ENCODE measurements at regions of chr10 and their contacts with region 1.

Region 1: DNA sequence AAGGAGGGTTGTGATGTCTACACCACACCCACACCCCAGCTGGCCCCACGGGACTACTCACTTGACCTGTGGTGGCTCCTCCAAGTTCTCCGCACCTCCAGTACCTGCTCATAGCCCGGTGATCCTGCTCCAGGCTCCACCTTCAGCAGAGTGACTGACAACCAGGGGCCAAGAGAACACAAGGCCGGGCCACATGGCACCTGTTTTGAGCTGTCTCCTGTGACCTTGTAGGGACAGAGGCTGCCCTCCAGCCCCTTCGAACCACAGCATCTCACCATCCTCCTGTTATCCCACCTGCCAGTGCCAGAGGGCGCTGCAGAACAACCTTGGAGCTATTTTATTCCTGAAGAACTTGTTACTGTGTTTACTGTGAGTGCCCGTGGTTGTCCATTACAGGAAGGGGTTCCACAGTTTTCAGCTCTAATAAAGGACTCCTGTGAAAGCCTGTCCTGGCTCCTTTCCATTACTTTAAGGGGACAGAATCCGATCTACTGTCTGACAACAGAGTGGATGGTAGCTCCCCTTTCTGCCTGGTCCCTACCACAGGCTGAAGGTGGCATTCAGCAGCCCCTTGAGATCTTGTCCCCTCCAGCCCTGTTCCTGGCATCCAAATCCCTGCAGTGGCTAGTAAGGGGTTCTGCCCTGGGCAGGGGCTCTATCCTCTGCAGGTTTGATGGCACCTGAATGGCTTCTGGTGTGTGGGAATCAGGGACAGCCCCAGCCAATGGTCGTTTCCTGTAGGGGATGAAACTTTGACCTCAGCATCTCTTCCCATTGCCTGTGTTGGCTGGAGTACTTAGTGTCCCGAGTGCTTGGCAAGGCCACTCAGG is 50.8 kb downstream of the C10orf120 start:
- DNase-seq: peak; percentile 34 to 64
- H3K4me3 ChIP-seq: no peak overlapping the region
- H3K4me1 ChIP-seq: no peaks in the 10 kb centered on the region
- H3K27me3 ChIP-seq: no peaks in the 10 kb centered on the region

Region 2: GRCh38 chr10:121572859-121573537 is 1075.8 kb before region 1 on chr10:
- in situ Hi-C with region 1: no loop called
- DNase-seq: no peak
- H3K4me3 ChIP-seq: no peak overlapping the region
- H3K4me1 ChIP-seq: peaks cover 8% of the 10 kb centered on the region; the same call in 1 of the 2 replicates
- H3K27me3 ChIP-seq: no peaks in the 10 kb centered on the region

Region 3: DNA sequence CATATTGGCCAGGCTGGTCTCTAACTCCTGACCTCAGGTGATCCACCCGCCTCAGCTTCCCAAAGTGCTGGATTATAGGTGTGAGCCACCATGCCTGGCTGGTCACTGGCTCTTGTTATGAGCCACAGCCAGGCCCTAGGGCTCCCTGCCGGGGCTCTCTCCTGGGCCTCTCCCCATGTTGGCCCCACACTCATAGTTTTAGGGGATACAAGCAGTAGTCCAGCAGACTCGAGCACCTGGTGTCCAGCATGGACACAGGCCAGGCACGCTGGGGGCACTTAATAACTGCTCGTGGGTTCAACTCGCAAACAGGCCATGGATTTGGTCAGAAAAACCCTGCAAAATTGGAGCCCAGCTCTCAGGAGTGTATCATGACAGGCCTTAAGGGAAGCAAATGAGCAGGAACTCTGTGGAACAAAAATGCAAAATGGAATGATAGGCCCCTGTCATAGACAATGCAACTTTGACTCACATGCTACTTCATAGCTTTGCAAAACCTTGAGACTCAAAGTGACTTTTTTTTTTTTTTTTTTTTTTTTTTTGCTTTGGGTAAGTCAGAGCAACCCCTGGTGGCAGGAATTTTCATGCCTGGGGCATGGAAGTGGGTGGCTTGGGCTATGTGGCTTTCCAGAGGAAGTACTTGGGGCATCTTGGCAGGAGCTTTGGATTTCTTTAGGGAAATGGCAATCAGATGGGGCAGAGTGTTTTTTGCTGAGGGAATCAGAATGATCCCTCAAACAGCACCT is 597.4 kb before region 1 on chr10:
- in situ Hi-C with region 1: no loop called
- DNase-seq: peak in 1 of 2 experiments; percentile 73
- H3K4me3 ChIP-seq: no peak overlapping the region
- H3K4me1 ChIP-seq: peaks cover 5% of the 10 kb centered on the region; the same call in 1 of the 2 replicates
- H3K27me3 ChIP-seq: no peaks in the 10 kb centered on the region

Region 4: DNA sequence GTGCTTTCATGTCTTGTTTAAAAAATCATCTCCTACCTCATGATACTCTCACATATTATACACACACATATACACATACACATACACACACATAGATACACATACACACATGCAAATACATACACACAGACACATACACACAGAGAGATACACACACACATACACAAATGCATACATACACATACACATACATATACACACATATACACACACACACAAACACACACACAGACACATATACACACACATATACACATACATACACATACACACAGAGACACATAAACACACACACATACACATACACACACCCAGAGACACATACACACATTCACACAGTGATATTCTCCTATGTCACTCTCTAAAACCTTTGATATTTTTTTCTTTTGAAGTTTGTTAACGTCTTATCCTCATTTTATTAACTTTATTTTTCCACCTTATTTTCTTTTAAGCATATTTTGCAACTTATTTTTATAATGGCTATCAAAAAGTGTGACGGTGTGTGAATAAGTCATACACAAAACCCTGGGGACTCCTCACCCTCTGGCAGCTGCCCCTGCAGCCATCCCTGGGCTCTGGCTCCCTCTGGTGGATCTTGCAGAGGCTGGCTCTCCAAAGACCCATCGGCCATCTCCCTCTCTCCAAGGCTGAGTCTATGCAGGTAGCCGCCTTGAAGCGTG is 54.8 kb after region 1 on chr10:
- in situ Hi-C with region 1: loop called (anchors 10 kb)
- DNase-seq: peak; percentile 31 to 78
- H3K4me3 ChIP-seq: no peak overlapping the region
- H3K4me1 ChIP-seq: no peaks in the 10 kb centered on the region
- H3K27me3 ChIP-seq: no peaks in the 10 kb centered on the region

Measured in HAP-1 (cell line).